OCI-LY7 (cell line): ENCODE measurements at regions of chr1 and their contacts with region 1.

Region 1: GRCh38 chr1:113830039-113830438 is 17.8 kb upstream of the RSBN1 start:
- DNase-seq: no peak
- H3K4me3 ChIP-seq: no peak overlapping the region
- H3K27ac ChIP-seq: no peak overlapping the region
- H3K4me1 ChIP-seq: no peaks in the 10 kb centered on the region
- CTCF ChIP-seq: no peak

Region 2: DNA sequence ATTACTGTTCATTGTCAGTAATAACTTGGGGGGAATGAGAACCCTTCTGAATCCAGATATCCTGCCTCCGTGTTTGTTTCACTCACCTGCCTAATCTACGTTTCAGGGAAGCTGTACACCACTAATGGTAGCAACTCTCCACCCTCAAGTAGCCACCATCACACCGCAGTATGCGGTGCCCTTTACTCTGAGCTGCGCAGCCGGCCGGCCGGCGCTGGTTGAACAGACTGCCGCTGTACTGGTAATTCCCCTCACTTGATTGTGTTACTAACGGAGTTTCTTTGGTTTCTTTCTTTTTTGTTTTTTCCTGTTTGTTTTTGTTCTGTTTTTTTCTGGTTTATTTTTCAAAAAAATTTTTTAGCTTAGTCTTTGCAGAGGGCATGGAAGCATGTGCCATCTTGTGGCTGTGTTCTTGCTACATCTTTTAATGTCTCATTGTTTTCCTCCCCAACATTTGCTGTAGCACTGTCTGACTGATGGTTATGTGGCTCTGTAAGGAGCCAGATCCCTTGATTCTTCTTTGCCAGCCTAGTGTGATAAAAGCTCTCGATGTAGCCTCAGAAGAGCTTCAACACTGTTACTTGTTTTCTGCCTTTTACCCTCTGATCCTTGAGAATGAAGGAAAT is 133.4 kb after region 1 on chr1:
- CTCF ChIA-PET with region 1: no interaction called
- POLR2A ChIA-PET with region 1: no interaction called
- intact Hi-C with region 1: loop called (anchors 5 kb)
- DNase-seq: peak; percentile 31
- H3K4me3 ChIP-seq: no peak overlapping the region
- H3K27ac ChIP-seq: no peak overlapping the region
- H3K4me1 ChIP-seq: no peaks in the 10 kb centered on the region
- CTCF ChIP-seq: peak; percentile 66